ENCODE measurements at regions of chr15 and their contacts with region 1.

Region 1: DNA sequence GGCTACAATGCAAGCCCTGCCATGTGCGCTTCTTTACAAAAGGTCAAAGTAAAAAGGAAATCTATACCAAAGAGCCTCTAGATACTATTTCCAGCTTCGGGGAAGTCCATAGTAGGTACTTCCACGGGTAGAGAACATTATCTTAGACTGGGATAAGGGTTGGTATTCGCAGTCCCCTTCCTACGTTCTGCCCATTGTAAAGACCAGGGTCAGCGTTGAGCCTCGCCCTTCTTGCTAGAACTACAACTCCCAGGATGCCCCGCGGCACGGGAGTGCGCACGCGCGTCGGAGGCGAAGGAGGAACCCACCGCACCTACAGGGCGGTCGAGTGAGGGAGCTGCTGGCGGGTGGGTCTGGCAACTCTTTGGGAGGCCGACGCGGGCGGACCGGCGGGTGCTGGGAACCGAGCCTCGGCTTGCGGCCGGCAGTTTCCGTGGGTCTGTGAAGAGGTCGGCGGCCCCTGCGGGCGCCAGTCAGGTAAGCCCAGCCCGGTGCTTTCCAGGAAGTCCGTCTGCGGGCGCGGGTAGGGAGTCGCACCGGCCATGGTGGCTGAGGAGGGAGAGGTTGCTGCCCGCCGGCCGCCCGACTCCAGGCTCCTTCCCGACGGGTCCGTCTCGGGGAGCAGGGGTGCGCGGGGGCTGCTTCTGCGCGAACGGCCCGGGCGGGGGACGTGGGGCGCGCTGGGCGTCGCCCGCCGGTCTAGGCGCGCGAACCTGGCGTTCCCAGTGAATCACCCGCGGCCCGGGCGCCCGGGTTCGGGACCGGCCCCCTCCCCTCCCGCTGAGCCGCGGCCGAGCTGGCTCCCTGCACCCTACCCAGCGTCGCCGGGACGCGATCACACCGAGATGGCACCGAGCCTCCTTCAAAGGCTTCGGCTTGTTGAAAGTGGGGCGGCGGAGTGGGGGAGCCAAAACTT is at the start of gene TMOD3:
- DNase-seq: peak; percentile 86
- H3K4me3 Mint-ChIP-seq: peak within 1 kb of the TSS; percentile 93
- H3K27ac Mint-ChIP-seq: peak within 1 kb of the TSS; percentile 94
- H3K4me1 Mint-ChIP-seq: peaks cover 37% of the 10 kb centered on the region
- H3K27me3 Mint-ChIP-seq: peaks cover 17% of the 10 kb centered on the region
- total RNA-seq, gene TMOD3: 64.3 and 66.0 TPM in 2 replicates

Region 2: DNA sequence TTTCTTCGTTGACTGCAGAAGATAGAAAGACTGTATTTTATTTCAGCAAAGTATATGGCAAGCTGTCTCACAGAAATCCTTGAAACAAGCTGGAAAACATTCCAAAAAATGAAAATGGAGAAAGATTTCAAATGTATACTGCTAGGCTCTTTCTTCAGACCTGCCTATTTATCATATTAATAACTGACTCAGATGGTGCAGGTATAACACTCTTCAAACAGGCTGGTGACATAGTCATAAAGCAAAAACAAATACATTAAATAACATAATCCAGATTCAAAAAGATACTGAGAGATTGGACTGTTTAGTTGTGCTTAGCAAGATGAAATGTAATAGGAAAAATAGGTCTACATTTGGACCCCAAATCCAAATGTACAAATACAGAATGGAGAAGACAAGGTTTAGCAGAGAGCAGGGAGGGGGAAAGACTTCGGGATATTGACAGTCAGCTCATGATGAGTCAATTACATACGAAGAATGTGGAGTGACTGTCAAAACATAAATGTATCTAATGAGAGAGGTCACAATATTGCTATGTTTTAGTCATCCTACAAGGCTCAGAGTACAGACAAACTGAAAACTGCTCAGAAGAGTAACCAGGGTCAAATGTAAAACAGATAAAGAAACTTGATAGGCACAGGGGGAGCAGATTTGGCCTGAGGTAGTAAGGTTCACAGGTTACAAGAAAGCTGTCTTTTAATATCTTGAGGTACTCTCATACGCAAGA is 295.8 kb before region 1 on chr15:
- intact Hi-C with region 1: no loop called
- DNase-seq: no peak
- H3K4me3 Mint-ChIP-seq: no peak overlapping the region
- H3K27ac Mint-ChIP-seq: no peak overlapping the region
- H3K4me1 Mint-ChIP-seq: no peaks in the 10 kb centered on the region
- H3K27me3 Mint-ChIP-seq: no peaks in the 10 kb centered on the region

Region 3: GRCh38 chr15:51737280-51738017 is 92.2 kb before region 1 on chr15 and contains the start of gene LYSMD2:
- intact Hi-C with region 1: loop called (anchors 5 kb)
- DNase-seq: peak; percentile 59
- H3K4me3 Mint-ChIP-seq: peak within 1 kb of the TSS; percentile 78
- H3K27ac Mint-ChIP-seq: peak within 1 kb of the TSS; percentile 74
- H3K4me1 Mint-ChIP-seq: peaks cover 42% of the 10 kb centered on the region
- H3K27me3 Mint-ChIP-seq: peaks cover 6% of the 10 kb centered on the region
- total RNA-seq, gene LYSMD2: 4.0 and 5.8 TPM in 2 replicates

Region 4: GRCh38 chr15:51801391-51801835 is 28.2 kb before region 1 on chr15:
- intact Hi-C with region 1: no loop called
- DNase-seq: no peak
- H3K4me3 Mint-ChIP-seq: no peak overlapping the region
- H3K27ac Mint-ChIP-seq: no peak overlapping the region
- H3K4me1 Mint-ChIP-seq: peaks cover 5% of the 10 kb centered on the region
- H3K27me3 Mint-ChIP-seq: no peaks in the 10 kb centered on the region

Region 5: DNA sequence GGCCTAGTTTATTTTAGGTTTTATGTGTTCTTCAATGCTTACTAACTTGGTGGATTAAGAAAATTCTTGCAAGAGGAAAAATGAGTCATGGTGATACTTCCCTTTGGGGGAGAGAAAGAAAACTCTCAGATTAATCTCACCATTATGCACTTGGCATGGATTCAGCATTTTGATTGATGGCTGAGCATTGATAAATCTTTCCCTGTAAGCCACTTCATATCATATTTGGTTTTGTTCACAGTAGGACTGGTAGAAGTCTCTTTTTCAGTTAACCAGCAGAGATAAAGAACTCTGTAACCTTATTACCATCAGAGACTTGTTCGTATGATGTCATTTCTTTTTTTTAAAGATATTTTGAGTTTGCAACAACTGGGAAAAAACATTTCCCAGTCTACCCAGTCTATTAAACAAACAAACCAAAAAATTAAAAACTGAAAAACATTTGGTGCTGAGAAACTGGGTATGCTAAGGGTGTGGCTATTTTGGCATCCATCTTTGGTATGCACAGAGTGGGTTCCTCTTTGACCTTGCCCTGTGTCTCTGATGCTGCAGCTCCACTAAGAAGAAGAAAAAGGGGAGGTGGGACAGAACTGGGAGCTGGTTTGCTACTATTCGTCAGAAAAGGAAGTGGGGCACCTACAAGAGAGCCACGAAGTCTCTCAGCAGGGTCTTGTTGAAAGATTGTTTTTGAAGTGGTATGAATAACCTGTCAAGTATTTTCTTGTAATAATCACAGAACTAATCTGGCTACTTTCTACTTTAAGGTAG is 17.0 kb after region 1 on chr15:
- intact Hi-C with region 1: no loop called
- DNase-seq: no peak
- H3K4me3 Mint-ChIP-seq: no peak overlapping the region
- H3K27ac Mint-ChIP-seq: peak overlapping the region; percentile 60
- H3K4me1 Mint-ChIP-seq: peaks cover 44% of the 10 kb centered on the region
- H3K27me3 Mint-ChIP-seq: no peaks in the 10 kb centered on the region

Region 6: GRCh38 chr15:51861557-51862359 is 32.1 kb after region 1 on chr15:
- intact Hi-C with region 1: loop called (anchors 1 kb)
- DNase-seq: peak; percentile 54
- H3K4me3 Mint-ChIP-seq: peak overlapping the region; percentile 51
- H3K27ac Mint-ChIP-seq: peak overlapping the region; percentile 42
- H3K4me1 Mint-ChIP-seq: peaks cover 54% of the 10 kb centered on the region
- H3K27me3 Mint-ChIP-seq: no peaks in the 10 kb centered on the region

Region 7: DNA sequence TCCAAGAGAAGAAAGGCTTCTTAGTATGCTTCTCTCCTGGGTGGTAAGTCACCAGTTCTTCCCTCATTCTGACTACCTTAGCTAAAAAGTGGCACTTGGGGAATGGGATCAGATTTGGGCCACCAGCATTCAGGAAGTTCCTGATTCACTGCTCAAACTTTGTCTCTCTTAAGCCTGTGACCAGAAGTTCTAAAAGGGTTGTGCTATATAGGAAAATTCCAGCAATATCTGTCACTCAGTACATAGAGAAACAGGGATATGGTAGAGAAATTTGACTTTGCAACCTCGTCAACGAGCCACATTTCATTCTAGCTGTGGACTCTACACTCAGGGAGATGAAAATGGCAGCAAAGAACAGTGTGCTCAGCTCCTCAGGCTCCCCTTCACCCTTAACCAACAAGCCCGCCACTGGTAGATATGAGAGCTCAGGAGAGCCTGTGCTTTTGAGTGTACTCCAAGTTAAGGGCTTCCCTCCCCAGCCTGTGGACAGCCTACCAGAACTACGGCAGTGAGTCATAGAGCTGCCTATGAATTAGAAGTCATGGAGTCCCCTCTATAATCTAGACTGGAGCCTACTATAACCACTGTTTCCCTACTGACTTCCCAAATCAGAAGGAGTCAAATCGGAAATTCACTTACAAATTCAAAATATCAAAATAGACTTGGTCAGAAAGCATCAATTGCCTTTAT is 518.6 kb after region 1 on chr15:
- intact Hi-C with region 1: no loop called
- DNase-seq: no peak
- H3K4me3 Mint-ChIP-seq: no peak overlapping the region
- H3K27ac Mint-ChIP-seq: no peak overlapping the region
- H3K4me1 Mint-ChIP-seq: peaks cover 9% of the 10 kb centered on the region
- H3K27me3 Mint-ChIP-seq: no peaks in the 10 kb centered on the region

Measured in activated T-helper 2 cell treated with anti-CD3 and anti-CD28 coated beads, Interferon-gamma antibody, Interleukin-2, Interleukin-4, amounts not matched to agents 10 μg/mL and 5 μg/mL and 100 μg/mL, durations not matched to agents 14 hours and 24 hours and 36 hours (primary cell).